Pancreas (tissue), 10 donors: ENCODE measurements at regions of chr6 and their contacts with region 1.

Region 1: GRCh38 chr6:52598123-52598823 is 21.4 kb upstream of the TRAM2 start:
- DNase-seq: peak in 4 of 6 donors; percentile 13 to 59 (median 44)
- ATAC-seq: peak in 3 of 4 donors; percentile 82 to 91 (median 88)
- H3K4me3 ChIP-seq: no peak overlapping the region
- H3K27ac ChIP-seq: no peak overlapping the region
- H3K4me1 ChIP-seq: no peaks in the 10 kb centered on the region
- H3K27me3 ChIP-seq: no peaks in the 10 kb centered on the region
- CTCF ChIP-seq: peak; percentile 18 to 49 (median 35)

Region 2: DNA sequence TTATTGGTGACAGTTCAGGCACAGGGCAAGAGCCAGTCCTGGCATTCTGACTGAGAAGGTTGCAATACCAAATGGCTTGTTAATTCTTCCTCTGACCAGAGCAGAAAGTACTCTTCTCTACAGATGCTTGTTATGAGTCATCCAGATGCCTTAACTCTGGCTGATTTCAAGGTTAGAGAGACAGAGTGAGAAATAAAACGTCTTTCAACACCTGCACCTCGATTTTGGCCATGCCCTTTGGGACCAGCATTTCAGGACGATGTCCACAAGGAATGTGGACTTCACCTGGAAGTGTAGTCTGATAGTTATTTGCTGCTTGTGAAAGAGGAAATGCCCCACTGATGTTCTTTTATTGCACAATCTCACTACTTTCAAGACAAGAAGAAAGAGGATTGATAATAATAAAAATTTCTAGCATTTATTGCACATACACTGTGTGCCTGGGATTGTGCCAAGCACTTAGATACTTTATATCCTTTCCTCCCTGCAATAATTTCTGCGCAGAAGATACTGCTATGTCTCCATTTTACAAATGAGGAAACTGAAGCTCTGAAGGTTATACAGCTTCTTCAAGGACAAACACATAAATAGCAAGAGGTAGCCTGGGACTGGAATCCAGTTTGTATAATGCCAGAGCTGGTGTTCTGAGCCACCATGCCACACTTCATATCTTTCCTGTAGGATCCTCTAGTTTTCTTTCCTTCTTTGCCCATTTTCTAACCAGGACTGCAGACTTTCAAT is 280.3 kb before region 1 on chr6:
- intact Hi-C with region 1: no loop called
- DNase-seq: no peak
- ATAC-seq: no peak
- H3K4me3 ChIP-seq: no peak overlapping the region
- H3K27ac ChIP-seq: no peak overlapping the region
- H3K4me1 ChIP-seq: no peaks in the 10 kb centered on the region
- H3K27me3 ChIP-seq: no peaks in the 10 kb centered on the region
- CTCF ChIP-seq: no peak

Region 3: DNA sequence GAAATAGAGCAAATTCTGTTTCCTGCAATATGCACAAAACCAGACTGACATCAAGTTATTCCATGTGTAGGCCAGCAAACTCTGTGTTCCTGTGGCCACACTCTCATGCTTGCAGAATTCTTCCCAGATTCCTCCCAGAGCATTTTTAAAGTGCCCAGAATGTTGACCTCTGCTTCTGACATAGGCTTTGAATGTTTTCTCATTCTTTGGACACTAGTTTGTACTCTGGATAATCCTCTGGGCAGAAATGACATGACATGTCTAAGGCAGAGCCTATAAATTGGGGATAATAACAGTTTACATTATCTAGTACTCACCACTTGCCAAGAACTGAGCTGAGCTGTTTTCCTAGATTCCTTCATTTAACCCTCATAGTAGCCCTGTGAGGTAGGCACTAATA is 187.3 kb before region 1 on chr6:
- intact Hi-C with region 1: loop called in 2 of 3 experiments (anchors 5 to 10 kb)
- DNase-seq: no peak
- ATAC-seq: no peak
- H3K4me3 ChIP-seq: no peak overlapping the region
- H3K27ac ChIP-seq: no peak overlapping the region
- H3K4me1 ChIP-seq: no peaks in the 10 kb centered on the region
- H3K27me3 ChIP-seq: no peaks in the 10 kb centered on the region
- CTCF ChIP-seq: no peak

Region 4: GRCh38 chr6:52419809-52420670 is 178.2 kb before region 1 on chr6 and contains the start of gene EFHC1:
- intact Hi-C with region 1: loop called in 1 of 3 experiments (anchors 10 kb)
- DNase-seq: peak; percentile 97 to 100 (median 99)
- ATAC-seq: peak; percentile 96 to 99 (median 98)
- H3K4me3 ChIP-seq: peak within 1 kb of the TSS; percentile 49 to 93 (median 64)
- H3K27ac ChIP-seq: peak within 1 kb of the TSS in 3 of 4 donors; percentile 64 to 80 (median 73)
- H3K4me1 ChIP-seq: peaks cover 0 to 3% (median 0%) of the 10 kb centered on the region in 3 donors
- H3K27me3 ChIP-seq: no peaks in the 10 kb centered on the region
- CTCF ChIP-seq: no peak
- total RNA-seq, gene EFHC1: 5.5 to 15.1 (median 9.8) TPM

Region 5: DNA sequence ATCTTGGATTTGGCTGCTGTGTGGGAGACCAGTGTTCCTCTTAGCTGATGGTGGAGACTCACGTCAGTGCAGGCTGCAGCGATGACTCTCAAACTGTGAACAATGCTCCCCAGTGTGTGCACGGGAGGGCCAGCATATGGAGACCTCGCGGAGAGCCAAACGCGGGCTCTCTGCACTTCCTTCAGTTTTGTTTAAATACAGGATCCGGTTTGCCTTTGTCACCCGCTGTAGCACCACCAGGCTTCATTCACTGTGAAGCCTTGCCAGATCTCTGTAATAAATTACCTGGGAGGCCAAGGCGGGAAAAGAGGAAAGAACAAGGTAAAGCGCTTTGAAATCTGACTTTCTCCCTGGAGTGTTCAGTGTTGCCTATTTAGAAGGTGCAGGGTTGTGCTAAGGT is 41.9 kb after region 1 on chr6:
- intact Hi-C with region 1: loop called in 1 of 3 experiments (anchors 10 kb)
- DNase-seq: peak in 2 of 6 donors; percentile 11 to 27
- ATAC-seq: peak; percentile 56 to 82 (median 78)
- H3K4me3 ChIP-seq: no peak overlapping the region
- H3K27ac ChIP-seq: no peak overlapping the region
- H3K4me1 ChIP-seq: no peaks in the 10 kb centered on the region
- H3K27me3 ChIP-seq: no peaks in the 10 kb centered on the region
- CTCF ChIP-seq: no peak